ENCODE measurements at regions of chr5 and their contacts with region 1.

Region 1: GRCh38 chr5:32585446-32586275 is at the start of gene SUB1:
- DNase-seq: peak; percentile 70
- H3K4me3 ChIP-seq: peak within 1 kb of the TSS; percentile 92
- H3K27ac ChIP-seq: peak within 1 kb of the TSS; percentile 94
- H3K27me3 ChIP-seq: no peaks in the 10 kb centered on the region
- CTCF ChIP-seq: no peak
- polyA plus RNA-seq, gene SUB1: 220 and 367 TPM in 2 replicates

Region 2: DNA sequence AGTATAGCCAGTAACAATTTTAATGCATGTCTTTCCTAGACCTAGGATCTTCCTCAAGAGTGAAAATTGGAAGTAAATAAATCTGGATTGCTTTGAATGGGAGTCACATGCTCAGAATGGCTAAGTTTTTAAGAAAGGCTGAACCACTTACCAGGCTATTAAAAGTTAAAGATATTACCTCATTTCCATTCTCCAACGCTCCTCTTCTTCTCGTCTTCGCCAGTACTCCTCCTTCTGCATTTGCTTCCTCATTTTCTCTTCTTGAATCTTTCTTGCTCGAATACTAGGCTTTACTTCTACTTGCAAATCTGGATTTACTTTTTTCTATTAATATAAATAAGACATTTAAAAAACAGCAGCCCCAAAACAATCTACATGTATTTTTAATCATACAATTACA is 190.7 kb before region 1 on chr5:
- CTCF ChIA-PET with region 1: interaction called, 10 read pairs
- POLR2A ChIA-PET with region 1: no interaction called
- DNase-seq: no peak
- H3K4me3 ChIP-seq: no peak overlapping the region
- H3K27ac ChIP-seq: no peak overlapping the region
- H3K27me3 ChIP-seq: no peaks in the 10 kb centered on the region
- CTCF ChIP-seq: no peak

Region 3: DNA sequence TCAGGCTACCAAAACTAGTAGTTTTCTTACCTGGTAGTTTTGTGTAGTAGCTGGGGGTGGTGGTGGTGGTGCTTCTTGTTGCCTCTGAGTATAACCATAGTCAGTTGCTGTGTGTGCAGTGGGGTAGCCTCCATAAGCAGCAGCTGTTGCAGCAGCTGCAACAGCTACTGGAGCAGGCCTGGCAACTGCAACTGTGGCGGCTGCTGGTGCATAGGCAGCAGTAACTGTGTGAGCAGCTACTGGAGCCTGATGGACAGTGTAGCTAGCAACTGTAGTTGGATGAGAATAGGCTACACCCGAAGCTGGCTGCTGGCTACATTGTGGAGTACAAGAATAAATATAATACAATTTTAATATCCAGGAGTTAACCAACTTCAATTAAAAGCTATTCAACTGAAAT is 165.9 kb before region 1 on chr5:
- CTCF ChIA-PET with region 1: interaction called, 21 read pairs
- POLR2A ChIA-PET with region 1: no interaction called
- DNase-seq: no peak
- H3K4me3 ChIP-seq: no peak overlapping the region
- H3K27ac ChIP-seq: no peak overlapping the region
- H3K27me3 ChIP-seq: no peaks in the 10 kb centered on the region
- CTCF ChIP-seq: no peak

Region 4: GRCh38 chr5:32489791-32490582 is 95.7 kb before region 1 on chr5:
- CTCF ChIA-PET with region 1: interaction called, 407 read pairs
- POLR2A ChIA-PET with region 1: interaction called, 7 read pairs
- DNase-seq: peak; percentile 83
- H3K4me3 ChIP-seq: peak overlapping the region; percentile 7; the same call in 1 of the 2 replicates
- H3K27ac ChIP-seq: peak overlapping the region; percentile 75
- H3K27me3 ChIP-seq: no peaks in the 10 kb centered on the region
- CTCF ChIP-seq: peak; percentile 80

Region 5: GRCh38 chr5:32504989-32505596 is 80.6 kb before region 1 on chr5:
- CTCF ChIA-PET with region 1: interaction called, 32 read pairs
- POLR2A ChIA-PET with region 1: interaction called, 14 read pairs
- DNase-seq: peak; percentile 95
- H3K4me3 ChIP-seq: peak overlapping the region; percentile 38; the same call in 1 of the 2 replicates
- H3K27ac ChIP-seq: peak overlapping the region; percentile 89
- H3K27me3 ChIP-seq: no peaks in the 10 kb centered on the region
- CTCF ChIP-seq: no peak

Region 6: GRCh38 chr5:32651638-32652037 is 66.0 kb after region 1 on chr5:
- CTCF ChIA-PET with region 1: interaction called, 10 read pairs
- POLR2A ChIA-PET with region 1: no interaction called
- DNase-seq: no peak
- H3K4me3 ChIP-seq: no peak overlapping the region
- H3K27ac ChIP-seq: no peak overlapping the region
- H3K27me3 ChIP-seq: peaks cover 4% of the 10 kb centered on the region
- CTCF ChIP-seq: no peak

Region 7: DNA sequence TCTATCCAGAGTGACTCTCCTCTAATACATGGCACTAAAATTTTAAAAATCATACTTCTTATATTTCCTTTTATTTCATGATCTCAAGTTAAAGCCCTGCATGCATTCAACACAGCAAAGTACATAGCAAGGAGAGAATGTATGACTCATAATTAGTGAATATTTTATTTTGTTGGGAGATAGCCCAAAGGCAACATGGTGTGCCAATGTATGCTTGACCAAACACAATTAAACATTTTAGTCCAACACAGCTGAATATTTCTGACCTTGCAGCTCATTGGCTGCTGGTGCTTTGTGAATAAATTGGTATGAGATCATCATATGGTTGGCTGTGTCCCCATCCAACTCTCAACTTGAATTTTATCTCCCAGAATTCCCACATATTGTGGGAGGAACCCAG is 229.0 kb after region 1 on chr5:
- CTCF ChIA-PET with region 1: no interaction called
- POLR2A ChIA-PET with region 1: no interaction called
- DNase-seq: no peak
- H3K4me3 ChIP-seq: no peak overlapping the region
- H3K27ac ChIP-seq: no peak overlapping the region
- H3K27me3 ChIP-seq: no peaks in the 10 kb centered on the region
- CTCF ChIP-seq: no peak